Caco-2 (cell line): ENCODE measurements at regions of chr4 and their contacts with region 1.

Region 1: DNA sequence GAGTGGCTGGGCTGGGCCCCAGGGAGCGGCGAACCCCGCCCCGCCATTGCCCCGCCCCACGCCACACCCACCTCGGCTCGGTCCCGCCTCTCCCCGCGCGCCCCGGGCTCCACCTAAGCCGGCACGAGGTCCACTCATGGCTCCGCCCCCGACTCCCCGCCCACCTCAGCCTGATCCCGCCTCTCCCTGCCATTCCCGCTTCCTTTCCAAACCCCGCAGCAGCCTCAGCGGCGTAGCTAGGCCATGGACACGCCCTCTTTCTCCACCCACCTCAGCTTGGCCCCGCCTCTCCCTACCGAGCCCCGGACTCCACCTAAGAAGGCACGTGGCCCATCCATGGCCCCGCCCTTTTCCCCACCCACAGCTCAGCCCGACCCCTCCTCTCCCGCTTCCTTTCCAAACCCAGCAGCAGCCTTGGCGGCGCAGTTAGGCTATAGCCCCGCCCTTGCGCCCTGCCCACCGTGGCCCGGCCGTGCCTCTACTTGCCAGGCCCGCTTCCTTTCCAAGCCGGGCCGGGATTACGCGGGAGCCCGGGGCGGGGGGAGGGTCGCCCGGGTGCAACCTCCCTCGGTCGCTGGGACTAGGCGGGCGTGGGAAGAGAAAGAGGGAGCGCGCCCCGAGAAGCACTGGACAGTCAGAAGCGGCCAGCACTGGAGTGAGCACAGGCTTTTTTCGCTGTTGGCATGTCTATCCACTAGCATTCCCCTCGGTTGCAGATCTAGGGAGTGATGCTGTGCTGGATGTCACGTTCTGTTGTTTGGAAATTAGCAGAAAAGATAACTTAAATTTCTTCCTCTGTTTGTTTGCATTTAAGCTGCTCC is at the start of gene RELL1:
- DNase-seq: peak; percentile 99 to 100
- H3K4me3 ChIP-seq: peak within 1 kb of the TSS; percentile 70
- H3K4me3 Mint-ChIP-seq: peak within 1 kb of the TSS; percentile 75
- H3K27ac Mint-ChIP-seq: peak within 1 kb of the TSS; percentile 86
- H3K4me1 ChIP-seq: peaks cover 32% of the 10 kb centered on the region
- H3K4me1 Mint-ChIP-seq: peaks cover 13% of the 10 kb centered on the region
- H3K27me3 ChIP-seq: no peaks in the 10 kb centered on the region
- H3K27me3 Mint-ChIP-seq: no peaks in the 10 kb centered on the region
- CTCF ChIP-seq: no peak
- total RNA-seq, gene RELL1: 45.3 and 48.5 TPM in 2 replicates

Region 2: DNA sequence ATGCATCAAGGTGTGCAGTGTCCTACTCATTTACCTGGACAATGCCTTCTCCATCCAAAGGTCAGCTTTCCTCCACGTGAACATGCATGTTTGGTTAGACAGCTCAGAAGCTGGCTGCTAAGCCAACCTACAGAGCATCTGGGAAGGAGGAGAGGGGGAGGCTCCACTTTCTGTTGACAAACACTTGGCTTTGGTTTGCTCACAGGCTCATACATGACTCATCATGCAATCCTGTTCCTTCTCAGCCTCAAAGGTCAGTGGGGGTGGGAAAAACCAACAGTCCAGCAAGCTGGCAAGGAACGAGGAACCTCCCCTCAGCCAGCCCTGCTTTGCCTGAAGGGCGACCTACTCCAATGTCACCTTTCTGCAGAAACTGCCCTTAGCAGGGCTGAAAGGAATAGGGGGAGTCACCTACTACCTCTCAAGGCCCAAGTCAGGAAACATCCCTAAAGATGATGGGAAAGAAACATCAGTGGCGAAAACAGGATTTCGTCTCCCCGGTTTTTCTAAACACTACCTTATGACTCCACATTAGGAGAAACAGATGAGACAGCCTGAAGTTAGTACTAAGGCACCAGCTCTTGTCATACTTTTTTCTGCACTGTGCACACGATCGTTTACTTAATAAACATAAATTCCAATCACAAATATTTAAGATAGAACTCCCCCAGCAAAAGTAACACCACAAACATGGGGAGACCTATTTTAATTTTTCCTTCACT is 38.3 kb before region 1 on chr4:
- CTCF ChIA-PET with region 1: no interaction called
- POLR2A ChIA-PET with region 1: interaction called, 3 read pairs
- intact Hi-C with region 1: loop called (anchors 1 kb)
- DNase-seq: peak; percentile 91 to 95
- H3K4me3 ChIP-seq: no peak overlapping the region
- H3K4me3 Mint-ChIP-seq: peak overlapping the region; percentile 62
- H3K27ac Mint-ChIP-seq: peak overlapping the region; percentile 81
- H3K4me1 ChIP-seq: peaks cover 47% of the 10 kb centered on the region
- H3K4me1 Mint-ChIP-seq: peaks cover 37% of the 10 kb centered on the region
- H3K27me3 ChIP-seq: no peaks in the 10 kb centered on the region
- H3K27me3 Mint-ChIP-seq: no peaks in the 10 kb centered on the region
- CTCF ChIP-seq: no peak

Region 3: DNA sequence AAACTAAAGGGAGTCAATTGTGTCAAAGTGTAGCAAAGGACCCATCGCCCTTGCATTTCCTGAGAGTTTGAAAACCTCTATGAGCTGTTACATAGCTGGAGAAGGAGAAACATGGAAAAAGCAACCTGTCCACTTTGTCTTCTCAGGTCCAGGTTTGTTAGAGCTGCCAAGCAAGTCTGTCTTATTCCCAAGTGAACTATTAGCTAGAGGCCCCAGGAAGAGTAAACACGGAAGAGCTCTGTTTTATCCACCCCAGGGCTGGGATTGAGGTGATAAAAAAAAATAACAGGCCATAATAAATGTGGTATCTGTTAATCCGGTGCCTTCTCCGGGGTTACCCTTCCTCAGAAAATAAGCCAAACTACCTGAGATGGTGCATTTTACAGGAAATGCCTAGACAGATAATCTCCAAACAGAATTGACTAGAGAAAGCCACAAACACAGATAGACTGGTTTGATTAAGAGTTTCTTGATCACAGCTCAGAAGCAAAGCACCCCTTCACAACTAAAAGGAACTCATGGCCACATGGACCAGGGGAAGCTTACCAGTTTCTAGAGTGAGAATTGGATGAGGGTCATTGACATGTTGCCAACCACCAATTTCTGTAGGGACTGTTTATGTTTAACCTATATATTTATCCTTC is 35.5 kb after region 1 on chr4:
- CTCF ChIA-PET with region 1: no interaction called
- POLR2A ChIA-PET with region 1: interaction called, 13 read pairs
- intact Hi-C with region 1: no loop called
- DNase-seq: peak in 1 of 2 experiments; percentile 39
- H3K4me3 ChIP-seq: no peak overlapping the region
- H3K4me3 Mint-ChIP-seq: no peak overlapping the region
- H3K27ac Mint-ChIP-seq: peak overlapping the region; percentile 26
- H3K4me1 ChIP-seq: peaks cover 20% of the 10 kb centered on the region
- H3K4me1 Mint-ChIP-seq: peaks cover 22% of the 10 kb centered on the region
- H3K27me3 ChIP-seq: no peaks in the 10 kb centered on the region
- H3K27me3 Mint-ChIP-seq: no peaks in the 10 kb centered on the region
- CTCF ChIP-seq: no peak

Region 4: DNA sequence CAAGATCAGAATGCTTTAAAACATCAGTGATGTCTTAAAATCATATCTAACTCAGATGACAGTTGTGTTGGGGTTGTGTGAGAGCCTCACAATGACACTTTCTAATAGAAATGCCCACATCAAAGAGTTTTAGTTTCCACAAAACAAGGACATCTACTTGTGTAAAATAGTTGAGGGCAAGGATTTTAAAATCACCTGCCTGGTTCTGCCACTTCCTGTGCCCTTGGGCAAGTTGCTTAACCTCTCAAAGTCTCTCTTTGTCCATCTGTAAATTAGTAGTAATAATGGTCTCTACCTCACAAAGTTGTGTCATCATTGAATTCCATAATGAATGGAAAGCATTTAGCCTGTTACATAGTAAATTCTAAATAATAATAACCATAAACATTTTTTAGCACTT is 41.5 kb after region 1 on chr4:
- CTCF ChIA-PET with region 1: no interaction called
- POLR2A ChIA-PET with region 1: interaction called, 3 read pairs
- intact Hi-C with region 1: loop called (anchors 2 kb)
- DNase-seq: no peak
- H3K4me3 ChIP-seq: no peak overlapping the region
- H3K4me3 Mint-ChIP-seq: no peak overlapping the region
- H3K27ac Mint-ChIP-seq: no peak overlapping the region
- H3K4me1 ChIP-seq: peaks cover 31% of the 10 kb centered on the region
- H3K4me1 Mint-ChIP-seq: peaks cover 36% of the 10 kb centered on the region
- H3K27me3 ChIP-seq: no peaks in the 10 kb centered on the region
- H3K27me3 Mint-ChIP-seq: no peaks in the 10 kb centered on the region
- CTCF ChIP-seq: no peak

Region 5: DNA sequence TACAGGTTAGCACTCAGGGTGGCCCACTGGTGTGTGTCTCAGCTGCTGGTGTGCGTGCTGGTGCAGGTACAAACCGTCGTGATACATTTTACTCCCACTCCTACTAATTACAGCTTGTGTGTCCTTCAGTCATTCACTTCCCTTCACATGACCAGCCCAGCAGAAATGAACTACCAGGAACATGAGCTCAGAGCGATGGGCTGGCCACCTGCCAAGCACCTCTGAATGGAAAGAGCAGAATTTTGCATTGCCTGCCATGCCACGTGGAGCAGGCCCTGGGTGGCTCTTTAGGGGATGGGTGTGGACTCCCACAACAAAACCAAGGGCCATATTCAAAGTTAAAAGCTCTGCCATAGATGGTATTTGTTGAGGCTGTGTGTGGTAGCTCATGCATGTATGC is 81.0 kb after region 1 on chr4:
- CTCF ChIA-PET with region 1: no interaction called
- POLR2A ChIA-PET with region 1: no interaction called
- intact Hi-C with region 1: no loop called
- DNase-seq: no peak
- H3K4me3 ChIP-seq: no peak overlapping the region
- H3K4me3 Mint-ChIP-seq: no peak overlapping the region
- H3K27ac Mint-ChIP-seq: no peak overlapping the region
- H3K4me1 ChIP-seq: no peaks in the 10 kb centered on the region; the same call in 1 of the 2 replicates
- H3K4me1 Mint-ChIP-seq: no peaks in the 10 kb centered on the region
- H3K27me3 ChIP-seq: no peaks in the 10 kb centered on the region
- H3K27me3 Mint-ChIP-seq: no peaks in the 10 kb centered on the region
- CTCF ChIP-seq: no peak

Region 6: GRCh38 chr4:37780444-37781150 is 94.0 kb after region 1 on chr4:
- CTCF ChIA-PET with region 1: no interaction called
- POLR2A ChIA-PET with region 1: no interaction called
- intact Hi-C with region 1: loop called (anchors 2 kb)
- DNase-seq: peak in 1 of 2 experiments; percentile 25
- H3K4me3 ChIP-seq: no peak overlapping the region
- H3K4me3 Mint-ChIP-seq: no peak overlapping the region
- H3K27ac Mint-ChIP-seq: no peak overlapping the region
- H3K4me1 ChIP-seq: peaks cover 9% of the 10 kb centered on the region; the same call in 1 of the 2 replicates
- H3K4me1 Mint-ChIP-seq: no peaks in the 10 kb centered on the region
- H3K27me3 ChIP-seq: no peaks in the 10 kb centered on the region
- H3K27me3 Mint-ChIP-seq: no peaks in the 10 kb centered on the region
- CTCF ChIP-seq: peak in 1 of 2 experiments; percentile 22

Region 7: DNA sequence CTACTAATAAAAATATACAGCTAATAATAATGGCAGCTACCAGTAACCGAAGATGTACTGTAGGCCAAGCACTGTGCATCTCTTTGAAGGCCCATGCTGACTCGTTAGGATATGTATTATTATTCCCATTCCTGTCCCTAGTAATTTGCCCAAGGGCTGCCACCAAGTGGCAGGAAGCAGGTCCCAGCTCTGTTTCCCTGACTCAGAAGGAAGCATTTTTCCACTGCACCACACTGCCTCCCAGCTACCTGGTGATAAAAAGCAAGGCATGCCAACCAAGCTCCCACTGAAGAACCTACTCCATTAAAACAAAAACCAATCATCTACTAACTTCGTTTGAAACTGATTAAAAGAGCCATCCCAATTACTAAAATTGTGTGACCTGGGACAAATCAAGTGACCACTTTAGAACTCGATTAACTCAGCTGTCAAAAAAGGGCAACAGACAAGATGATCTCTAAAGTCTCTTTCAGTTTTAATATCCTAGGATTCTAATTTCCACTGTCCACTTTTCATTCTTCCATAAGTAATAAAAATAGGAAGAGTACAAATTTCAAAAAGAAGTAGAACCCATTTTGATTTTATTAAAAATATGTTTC is 115.6 kb after region 1 on chr4:
- CTCF ChIA-PET with region 1: interaction called, 7 read pairs
- POLR2A ChIA-PET with region 1: no interaction called
- intact Hi-C with region 1: loop called (anchors 5 kb)
- DNase-seq: peak; percentile 73 to 77
- H3K4me3 ChIP-seq: no peak overlapping the region
- H3K4me3 Mint-ChIP-seq: no peak overlapping the region
- H3K27ac Mint-ChIP-seq: no peak overlapping the region
- H3K4me1 ChIP-seq: no peaks in the 10 kb centered on the region
- H3K4me1 Mint-ChIP-seq: peaks cover 18% of the 10 kb centered on the region
- H3K27me3 ChIP-seq: no peaks in the 10 kb centered on the region
- H3K27me3 Mint-ChIP-seq: no peaks in the 10 kb centered on the region
- CTCF ChIP-seq: peak; percentile 59 to 80

Region 8: GRCh38 chr4:38620790-38621684 is 934.5 kb after region 1 on chr4:
- CTCF ChIA-PET with region 1: no interaction called
- POLR2A ChIA-PET with region 1: interaction called, 10 read pairs
- intact Hi-C with region 1: no loop called
- DNase-seq: peak; percentile 81 to 90
- H3K4me3 ChIP-seq: no peak overlapping the region
- H3K4me3 Mint-ChIP-seq: peak overlapping the region; percentile 65
- H3K27ac Mint-ChIP-seq: peak overlapping the region; percentile 65
- H3K4me1 ChIP-seq: peaks cover 23% of the 10 kb centered on the region
- H3K4me1 Mint-ChIP-seq: peaks cover 21% of the 10 kb centered on the region
- H3K27me3 ChIP-seq: no peaks in the 10 kb centered on the region
- H3K27me3 Mint-ChIP-seq: no peaks in the 10 kb centered on the region
- CTCF ChIP-seq: no peak